Left cardiac atrium (tissue), 4 donors: ENCODE measurements at regions of chr17 and their contacts with region 1.

Region 1: DNA sequence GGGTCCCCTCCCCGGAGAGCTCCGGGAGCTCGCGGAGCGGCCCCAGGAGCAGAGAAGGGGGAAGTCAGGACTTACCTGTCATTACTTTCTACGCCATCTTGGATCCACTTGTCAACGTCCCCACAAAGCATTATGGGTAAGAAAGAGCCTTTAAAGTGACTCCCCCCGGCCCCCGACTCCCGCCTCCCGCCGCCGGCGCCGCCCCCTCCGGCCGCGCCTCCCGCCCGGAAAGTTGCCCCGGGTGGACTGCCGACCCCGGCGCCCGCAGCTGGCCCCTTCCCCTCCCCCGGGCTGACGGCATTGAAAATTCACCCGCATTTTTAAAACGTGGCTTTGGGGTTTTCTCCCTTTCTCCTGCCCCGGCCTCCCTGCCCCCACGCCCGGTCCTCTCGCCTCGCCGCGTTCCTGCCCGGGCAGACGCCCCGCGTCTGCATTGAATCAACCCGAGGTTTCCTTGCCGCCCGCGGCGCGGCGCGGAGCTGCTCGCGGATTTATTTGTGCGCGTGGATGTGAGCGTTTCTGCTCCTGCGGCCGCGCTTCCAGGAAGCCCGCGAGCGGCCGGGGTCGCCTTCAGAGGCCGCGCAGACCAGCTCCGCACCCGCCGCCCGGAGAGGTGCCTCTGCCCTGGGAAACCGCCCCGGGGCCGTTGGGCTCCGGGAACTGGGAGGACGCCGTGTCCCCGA is at the start of gene HELZ:
- DNase-seq: peak; percentile 70
- ATAC-seq: peak; percentile 91
- total RNA-seq, gene HELZ: 34.5 to 36.0 TPM

Region 2: DNA sequence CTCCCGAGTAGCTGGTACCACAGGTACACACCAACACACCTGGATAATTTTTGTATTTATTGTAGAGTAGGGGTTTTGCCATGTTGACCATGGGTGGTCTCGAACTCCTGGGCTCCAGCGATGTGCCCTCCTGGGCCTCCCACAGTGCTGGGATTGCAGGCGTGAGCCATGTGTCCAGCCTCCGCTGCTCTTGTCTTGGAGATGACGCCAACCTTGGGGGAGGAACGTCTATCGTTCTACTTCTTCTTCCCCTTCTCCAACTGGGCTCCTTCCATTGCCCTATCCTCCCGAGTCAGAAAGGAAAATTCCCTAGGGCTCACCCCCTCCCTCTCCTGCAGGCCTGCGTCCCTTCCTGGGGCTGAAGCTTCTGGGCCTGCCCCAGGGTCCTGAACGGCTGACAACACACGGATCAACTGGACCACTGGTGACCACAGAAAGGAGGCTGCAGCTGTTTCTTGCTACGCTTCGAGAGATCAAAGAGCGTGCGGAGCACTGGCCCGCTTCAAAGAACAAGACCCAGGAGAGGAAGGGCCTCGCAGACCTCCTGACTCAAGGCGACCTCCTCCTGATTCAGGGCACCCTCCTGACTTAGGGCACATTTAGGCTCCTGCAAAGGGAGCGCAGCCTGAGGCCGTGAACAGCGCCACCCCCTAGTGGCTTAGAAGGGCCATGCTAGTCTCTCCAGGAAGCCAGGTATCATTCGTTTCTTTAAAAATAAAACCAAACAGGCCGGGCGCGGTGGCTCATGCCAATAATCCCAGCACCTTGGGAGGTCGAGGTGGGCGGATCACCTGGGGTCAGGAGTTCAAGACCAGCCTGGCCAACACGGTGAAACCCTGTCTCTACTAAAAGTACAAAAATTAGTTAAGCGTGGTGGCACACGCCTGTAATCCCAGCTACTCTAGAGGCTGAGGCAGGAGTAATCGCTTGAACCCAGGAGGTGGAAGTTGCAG is 48.3 kb after region 1 on chr17:
- intact Hi-C with region 1: loop called in 1 of 2 experiments (anchors 10 kb)
- DNase-seq: peak; percentile 68
- ATAC-seq: peak; percentile 56 to 74